Activated naive CD4-positive, alpha-beta T cell treated with anti-CD3 and anti-CD28 coated beads for 36 hours (primary cell): ENCODE measurements at regions of chr3 and their contacts with region 1.

Region 1: GRCh38 chr3:113745273-113746068 is 578 bp downstream of the NAA50 start:
- DNase-seq: peak; percentile 92
- H3K4me3 Mint-ChIP-seq: peak overlapping the region; percentile 98
- H3K27ac Mint-ChIP-seq: peak overlapping the region; percentile 100
- H3K4me1 Mint-ChIP-seq: peaks cover 63% of the 10 kb centered on the region
- H3K27me3 Mint-ChIP-seq: no peaks in the 10 kb centered on the region

Region 2: GRCh38 chr3:112561731-112562688 is 1183.5 kb before region 1 on chr3 and contains the starts of genes ATG3 and SLC35A5:
- CTCF ChIA-PET with region 1: no interaction called
- intact Hi-C with region 1: loop called (anchors 2 kb)
- DNase-seq: peak; percentile 99
- H3K4me3 Mint-ChIP-seq: peak within 1 kb of the TSS; percentile 90
- H3K27ac Mint-ChIP-seq: peak within 1 kb of the TSS; percentile 98
- H3K4me1 Mint-ChIP-seq: peaks cover 29% of the 10 kb centered on the region
- H3K27me3 Mint-ChIP-seq: no peaks in the 10 kb centered on the region
- total RNA-seq, gene ATG3: 49.2 to 50.4 TPM
- total RNA-seq, gene SLC35A5: 15.7 to 16.0 TPM

Region 3: GRCh38 chr3:113287803-113288648 is 457.4 kb before region 1 on chr3:
- CTCF ChIA-PET with region 1: no interaction called
- intact Hi-C with region 1: loop called (anchors 1 kb)
- DNase-seq: peak; percentile 67
- H3K4me3 Mint-ChIP-seq: no peak overlapping the region
- H3K27ac Mint-ChIP-seq: no peak overlapping the region
- H3K4me1 Mint-ChIP-seq: peaks cover 6% of the 10 kb centered on the region
- H3K27me3 Mint-ChIP-seq: no peaks in the 10 kb centered on the region

Region 4: GRCh38 chr3:113575206-113575605 is 170.3 kb before region 1 on chr3:
- CTCF ChIA-PET with region 1: interaction called, 5 read pairs
- intact Hi-C with region 1: loop called (anchors 1 kb)
- DNase-seq: no peak
- H3K4me3 Mint-ChIP-seq: no peak overlapping the region
- H3K27ac Mint-ChIP-seq: no peak overlapping the region
- H3K4me1 Mint-ChIP-seq: peaks cover 8% of the 10 kb centered on the region
- H3K27me3 Mint-ChIP-seq: no peaks in the 10 kb centered on the region

Region 5: DNA sequence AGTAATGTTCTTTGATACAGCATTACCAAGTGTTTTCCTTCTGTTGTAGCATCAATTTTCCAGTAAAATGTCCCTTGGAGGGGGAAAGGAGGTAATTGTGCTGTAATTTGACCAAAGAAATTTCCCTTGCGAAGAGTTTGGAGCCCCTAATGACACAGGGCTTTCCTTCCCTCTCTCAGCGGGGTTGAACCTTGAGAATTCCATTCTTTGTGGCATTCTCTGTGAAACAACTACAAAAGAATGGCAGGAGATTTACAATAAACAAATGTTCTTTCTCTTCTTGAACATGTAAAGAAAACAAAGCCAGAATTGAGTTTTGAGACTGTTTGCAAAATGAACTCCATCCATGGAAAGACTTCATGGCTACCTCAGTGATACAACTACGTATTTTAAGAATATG is 159.8 kb before region 1 on chr3:
- CTCF ChIA-PET with region 1: no interaction called
- intact Hi-C with region 1: no loop called
- DNase-seq: no peak
- H3K4me3 Mint-ChIP-seq: no peak overlapping the region
- H3K27ac Mint-ChIP-seq: no peak overlapping the region
- H3K4me1 Mint-ChIP-seq: peaks cover 7% of the 10 kb centered on the region
- H3K27me3 Mint-ChIP-seq: no peaks in the 10 kb centered on the region

Region 6: DNA sequence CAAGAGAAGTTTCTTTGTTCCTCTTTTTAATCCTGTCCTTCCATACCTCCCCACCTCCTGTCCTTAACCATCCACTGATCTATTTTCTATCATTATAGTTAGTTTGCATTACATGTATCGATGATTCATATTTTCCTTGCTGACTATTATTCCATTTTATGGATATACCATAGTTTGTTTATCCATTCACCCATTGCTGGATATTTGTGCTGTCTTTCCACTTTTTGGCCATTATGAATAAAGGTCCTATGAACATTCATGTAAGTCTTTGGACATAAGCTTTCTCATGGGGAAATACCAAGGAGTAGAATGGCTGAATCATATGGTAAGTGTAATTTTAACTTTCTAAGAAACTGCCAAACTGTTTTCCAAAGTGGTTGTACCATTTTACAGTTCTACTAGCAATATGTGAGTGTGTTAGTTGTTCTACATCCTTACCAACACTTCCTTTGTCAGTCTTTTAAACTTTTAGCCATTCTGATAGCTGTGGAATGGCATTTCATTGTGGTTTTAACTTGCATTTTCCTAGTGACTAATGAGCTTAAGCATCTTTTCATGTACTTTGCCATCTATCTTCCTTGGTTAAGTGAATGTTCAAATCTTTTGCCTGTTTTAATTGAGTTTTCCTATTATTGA is 13.0 kb after region 1 on chr3:
- CTCF ChIA-PET with region 1: interaction called, 13 read pairs
- intact Hi-C with region 1: no loop called
- DNase-seq: no peak
- H3K4me3 Mint-ChIP-seq: no peak overlapping the region
- H3K27ac Mint-ChIP-seq: peak overlapping the region; percentile 2
- H3K4me1 Mint-ChIP-seq: peaks cover 10% of the 10 kb centered on the region
- H3K27me3 Mint-ChIP-seq: no peaks in the 10 kb centered on the region

Region 7: DNA sequence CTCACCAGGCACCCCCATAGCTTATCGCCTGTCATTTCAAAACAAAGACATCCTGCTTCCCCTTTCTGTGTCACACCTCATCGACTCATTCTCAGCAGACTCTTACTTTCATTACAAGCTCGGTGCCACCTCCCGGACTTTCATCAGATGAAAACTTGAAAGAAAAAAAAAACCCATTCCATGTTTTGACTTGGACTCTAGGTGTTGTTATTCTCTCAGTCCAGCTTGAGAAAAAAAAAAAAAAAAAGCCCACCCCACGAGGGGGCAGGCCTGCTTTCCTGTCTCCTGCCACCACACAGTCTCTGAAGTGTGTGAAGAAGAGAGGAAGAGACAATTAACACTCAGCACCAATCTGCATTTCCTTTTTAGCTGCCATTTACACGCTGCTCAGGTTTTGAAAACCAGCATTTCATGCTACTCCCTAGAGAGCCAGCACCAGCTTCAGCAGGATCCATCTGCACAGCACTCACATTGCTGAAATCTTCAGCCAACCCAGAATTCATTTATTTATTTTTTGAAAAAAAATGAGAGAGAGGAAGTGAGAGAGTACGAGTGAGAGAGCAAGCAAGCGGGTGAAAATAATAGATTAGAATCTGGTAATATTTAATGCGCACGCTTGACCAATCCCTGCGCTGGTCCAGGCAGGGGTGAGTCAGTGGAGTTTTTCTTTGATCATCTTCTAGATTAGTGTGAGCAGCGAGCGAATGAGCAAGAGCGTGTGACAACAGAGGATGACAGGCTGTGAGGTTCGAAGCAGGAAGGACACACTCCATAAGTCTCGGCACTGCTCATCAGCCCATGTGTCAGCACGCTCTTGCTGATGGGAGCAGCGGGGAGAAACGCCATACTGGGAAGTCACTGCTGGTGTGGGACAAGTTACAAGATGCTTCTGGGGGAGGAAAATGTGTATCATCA is 468.4 kb after region 1 on chr3:
- CTCF ChIA-PET with region 1: no interaction called
- intact Hi-C with region 1: loop called (anchors 1 kb)
- DNase-seq: peak; percentile 88
- H3K4me3 Mint-ChIP-seq: no peak overlapping the region
- H3K27ac Mint-ChIP-seq: no peak overlapping the region
- H3K4me1 Mint-ChIP-seq: peaks cover 8% of the 10 kb centered on the region
- H3K27me3 Mint-ChIP-seq: no peaks in the 10 kb centered on the region